CD4-positive, alpha-beta memory T cell (primary cell): ENCODE measurements at regions of chr3 and their contacts with region 1.

Region 1: DNA sequence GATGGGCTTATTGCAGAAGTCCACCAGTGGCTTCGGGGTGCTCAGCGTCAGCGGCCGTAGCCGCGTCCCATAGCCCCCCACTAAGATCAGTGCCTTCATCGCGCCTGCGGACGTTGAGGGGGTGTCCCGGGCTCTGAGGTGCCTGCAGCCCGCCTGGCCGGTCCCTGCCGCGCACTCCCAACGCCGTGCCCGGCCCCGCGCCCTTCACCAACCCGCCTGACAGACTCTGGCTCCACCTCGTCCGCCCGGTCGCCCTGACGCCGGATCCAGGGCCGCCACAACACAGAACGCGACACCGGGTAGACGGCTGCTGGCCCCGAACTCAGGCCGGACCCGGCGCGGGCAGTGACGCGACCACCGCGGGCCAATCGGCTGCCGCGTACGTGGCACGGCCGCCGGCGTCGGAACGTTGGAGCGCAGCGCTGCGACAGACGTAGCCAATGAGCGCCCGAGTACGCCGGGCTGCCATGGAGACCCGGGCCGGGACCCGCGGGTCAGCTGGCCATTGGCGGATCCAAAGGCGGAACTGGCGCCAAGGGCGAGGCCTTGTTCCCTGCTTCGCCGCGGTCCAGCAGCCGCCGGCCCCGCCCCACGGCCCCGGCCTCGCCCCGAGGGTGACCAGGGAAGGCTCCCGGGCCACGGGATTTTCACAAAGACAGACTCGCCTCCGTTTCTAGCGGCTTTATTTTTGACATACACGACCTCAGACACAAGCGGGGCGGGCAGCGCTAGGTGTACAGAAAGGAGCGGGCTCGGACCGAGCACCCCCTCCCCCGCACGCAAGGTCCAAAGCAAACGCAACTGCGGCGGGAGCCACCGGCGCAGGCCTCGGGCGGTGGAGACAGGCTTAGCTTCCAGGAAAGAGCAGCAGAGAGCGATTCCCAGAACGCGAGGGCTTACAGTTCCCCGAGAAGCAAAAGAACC is at the start of gene GMPPB:
- DNase-seq: peak; percentile 88 to 92 (median 92)
- H3K4me3 ChIP-seq: peak within 1 kb of the TSS; percentile 85 to 89
- H3K4me3 Mint-ChIP-seq: peak within 1 kb of the TSS; percentile 93 to 98 (median 96)
- H3K27ac ChIP-seq: peak within 1 kb of the TSS; percentile 99
- H3K27ac Mint-ChIP-seq: peak within 1 kb of the TSS; percentile 98 to 99 (median 99)
- H3K4me1 ChIP-seq: peaks cover 26% of the 10 kb centered on the region
- H3K4me1 Mint-ChIP-seq: peaks cover 13 to 48% (median 24%) of the 10 kb centered on the region in 4 donors
- H3K27me3 ChIP-seq: no peaks in the 10 kb centered on the region
- H3K27me3 Mint-ChIP-seq: peaks cover 0 to 2% of the 10 kb centered on the region in 2 donors
- total RNA-seq, gene GMPPB: 59.5 to 61.3 TPM

Region 2: GRCh38 chr3:49689046-49689907 is 34.6 kb before region 1 on chr3 and contains the starts of genes MST1 and RNF123:
- CTCF ChIA-PET with region 1: no interaction called
- POLR2A ChIA-PET with region 1: no interaction called
- intact Hi-C with region 1: loop called (anchors 2 kb)
- DNase-seq: peak; percentile 90 to 95 (median 92)
- H3K4me3 ChIP-seq: peak within 1 kb of the TSS; percentile 91 to 98
- H3K4me3 Mint-ChIP-seq: peak within 1 kb of the TSS; percentile 90 to 99 (median 96)
- H3K27ac ChIP-seq: peak within 1 kb of the TSS; percentile 72
- H3K27ac Mint-ChIP-seq: peak within 1 kb of the TSS; percentile 93 to 98 (median 97)
- H3K4me1 ChIP-seq: peaks cover 27% of the 10 kb centered on the region
- H3K4me1 Mint-ChIP-seq: peaks cover 16 to 52% (median 35%) of the 10 kb centered on the region in 4 donors
- H3K27me3 ChIP-seq: no peaks in the 10 kb centered on the region
- H3K27me3 Mint-ChIP-seq: peaks cover 2 to 3% of the 10 kb centered on the region in 2 donors
- total RNA-seq, gene MST1: 6.3 to 10.2 TPM
- total RNA-seq, gene RNF123: 69.7 to 74.7 TPM

Region 3: GRCh38 chr3:49786241-49786958 is 62.5 kb after region 1 on chr3 and contains the start of gene IP6K1:
- CTCF ChIA-PET with region 1: no interaction called
- POLR2A ChIA-PET with region 1: interaction called, 7 read pairs
- intact Hi-C with region 1: loop called (anchors 1 kb)
- DNase-seq: peak; percentile 98 to 100 (median 99)
- H3K4me3 ChIP-seq: peak within 1 kb of the TSS; percentile 79 to 89
- H3K4me3 Mint-ChIP-seq: peak within 1 kb of the TSS; percentile 92 to 98 (median 92)
- H3K27ac ChIP-seq: peak within 1 kb of the TSS; percentile 89
- H3K27ac Mint-ChIP-seq: peak within 1 kb of the TSS; percentile 98 to 99 (median 99)
- H3K4me1 ChIP-seq: peaks cover 30% of the 10 kb centered on the region
- H3K4me1 Mint-ChIP-seq: peaks cover 18 to 47% (median 31%) of the 10 kb centered on the region in 4 donors
- H3K27me3 ChIP-seq: no peaks in the 10 kb centered on the region
- H3K27me3 Mint-ChIP-seq: peaks cover 0 to 2% of the 10 kb centered on the region in 2 donors
- total RNA-seq, gene IP6K1: 50.1 to 60.0 TPM

Region 4: GRCh38 chr3:50126287-50127211 is 402.7 kb after region 1 on chr3:
- CTCF ChIA-PET with region 1: no interaction called
- POLR2A ChIA-PET with region 1: no interaction called
- intact Hi-C with region 1: no loop called
- DNase-seq: no peak
- H3K4me3 ChIP-seq: no peak overlapping the region
- H3K4me3 Mint-ChIP-seq: no peak overlapping the region
- H3K27ac ChIP-seq: no peak overlapping the region
- H3K27ac Mint-ChIP-seq: peak overlapping the region in 1 of 7 donors; percentile 44
- H3K4me1 ChIP-seq: no peaks in the 10 kb centered on the region
- H3K4me1 Mint-ChIP-seq: peaks cover 0 to 6% (median 1%) of the 10 kb centered on the region in 4 donors
- H3K27me3 ChIP-seq: no peaks in the 10 kb centered on the region
- H3K27me3 Mint-ChIP-seq: no peaks in the 10 kb centered on the region